ENCODE measurements at regions of chr6 and their contacts with region 1.

Region 1: GRCh38 chr6:27687154-27688013 is 214.5 kb upstream of the ZNF184 start:
- DNase-seq: peak; percentile 86
- H3K4me3 ChIP-seq: peak overlapping the region; percentile 45
- H3K27ac ChIP-seq: peak overlapping the region; percentile 15
- H3K4me1 ChIP-seq: no peaks in the 10 kb centered on the region
- H3K27me3 ChIP-seq: no peaks in the 10 kb centered on the region
- CTCF ChIP-seq: peak; percentile 60

Region 2: GRCh38 chr6:27565821-27566766 is 121.3 kb before region 1 on chr6:
- intact Hi-C with region 1: no loop called
- DNase-seq: no peak
- H3K4me3 ChIP-seq: no peak overlapping the region
- H3K27ac ChIP-seq: no peak overlapping the region
- H3K4me1 ChIP-seq: no peaks in the 10 kb centered on the region
- H3K27me3 ChIP-seq: peaks cover 19% of the 10 kb centered on the region
- CTCF ChIP-seq: no peak

Region 3: DNA sequence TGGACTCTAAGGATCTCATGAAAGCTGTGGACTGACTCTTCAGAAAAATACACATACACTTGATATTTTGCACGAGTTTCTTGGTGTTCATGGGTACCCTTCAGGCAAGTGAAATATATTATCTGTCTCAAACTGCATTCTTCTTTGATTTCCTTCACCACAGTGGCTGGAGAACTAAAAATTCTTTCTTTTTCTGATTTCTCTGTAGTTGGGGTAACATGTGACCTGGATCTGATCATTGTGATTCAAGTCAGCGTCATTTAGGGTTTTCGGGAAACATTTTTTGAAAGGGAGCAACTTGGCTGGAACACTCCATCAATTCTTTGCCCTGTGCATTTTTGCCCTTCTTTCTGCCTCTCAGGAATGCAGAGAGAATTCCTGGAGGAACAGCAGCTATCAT is 19.0 kb after region 1 on chr6:
- intact Hi-C with region 1: no loop called
- DNase-seq: no peak
- H3K4me3 ChIP-seq: no peak overlapping the region
- H3K27ac ChIP-seq: no peak overlapping the region
- H3K4me1 ChIP-seq: no peaks in the 10 kb centered on the region
- H3K27me3 ChIP-seq: no peaks in the 10 kb centered on the region
- CTCF ChIP-seq: no peak

Region 4: DNA sequence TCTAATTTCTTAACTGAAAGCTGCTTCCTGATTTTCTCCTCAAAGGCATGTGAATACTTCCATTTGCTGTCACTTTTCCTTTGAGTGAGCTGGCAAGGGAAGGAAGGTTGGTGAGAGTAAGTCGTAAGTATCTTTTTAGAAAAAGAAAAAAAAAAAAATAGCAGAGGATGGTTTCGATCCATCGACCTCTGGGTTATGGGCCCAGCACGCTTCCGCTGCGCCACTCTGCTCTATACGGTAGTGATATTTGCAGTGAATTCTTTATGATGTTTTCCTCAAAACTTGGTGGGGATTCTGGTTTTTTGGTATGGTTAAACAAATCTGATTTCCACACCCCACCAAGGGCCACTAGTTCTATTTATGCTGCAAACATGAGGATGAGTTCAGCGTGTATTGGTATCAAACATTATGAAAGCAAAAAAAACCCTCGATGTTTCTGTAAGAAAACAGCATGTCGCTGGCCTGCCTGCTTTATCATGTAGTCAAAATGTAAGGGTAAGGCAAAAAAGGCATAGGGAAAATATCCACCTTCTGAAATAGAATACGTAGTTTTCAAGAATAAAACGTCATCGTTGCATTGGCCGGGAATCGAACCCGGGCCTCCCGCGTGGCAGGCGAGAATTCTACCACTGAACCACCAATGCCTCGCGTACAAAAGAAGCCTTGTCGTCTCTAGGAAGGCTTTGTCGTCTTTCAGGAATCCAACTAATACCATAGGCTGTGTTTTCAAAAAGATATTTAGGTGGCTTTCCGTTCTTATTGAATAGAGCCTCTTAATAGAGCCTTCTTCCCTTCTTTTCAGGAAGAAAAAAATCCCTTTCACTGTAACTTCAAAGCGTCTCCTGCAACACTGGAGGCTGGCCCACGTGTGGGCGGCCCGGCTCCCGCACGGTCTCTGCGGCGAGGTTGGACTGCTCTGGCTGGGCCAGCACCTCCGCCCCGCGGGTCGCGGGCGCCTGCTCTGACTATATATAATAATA is 215.2 kb after region 1 on chr6:
- intact Hi-C with region 1: loop called (anchors 10 kb)
- DNase-seq: peak; percentile 92
- H3K4me3 ChIP-seq: peak overlapping the region; percentile 55
- H3K27ac ChIP-seq: peak overlapping the region; percentile 28
- H3K4me1 ChIP-seq: no peaks in the 10 kb centered on the region
- H3K27me3 ChIP-seq: no peaks in the 10 kb centered on the region
- CTCF ChIP-seq: no peak